Cardiac septum (tissue), 1 donor: ENCODE measurements at regions of chr3 and their contacts with region 1.

Region 1: DNA sequence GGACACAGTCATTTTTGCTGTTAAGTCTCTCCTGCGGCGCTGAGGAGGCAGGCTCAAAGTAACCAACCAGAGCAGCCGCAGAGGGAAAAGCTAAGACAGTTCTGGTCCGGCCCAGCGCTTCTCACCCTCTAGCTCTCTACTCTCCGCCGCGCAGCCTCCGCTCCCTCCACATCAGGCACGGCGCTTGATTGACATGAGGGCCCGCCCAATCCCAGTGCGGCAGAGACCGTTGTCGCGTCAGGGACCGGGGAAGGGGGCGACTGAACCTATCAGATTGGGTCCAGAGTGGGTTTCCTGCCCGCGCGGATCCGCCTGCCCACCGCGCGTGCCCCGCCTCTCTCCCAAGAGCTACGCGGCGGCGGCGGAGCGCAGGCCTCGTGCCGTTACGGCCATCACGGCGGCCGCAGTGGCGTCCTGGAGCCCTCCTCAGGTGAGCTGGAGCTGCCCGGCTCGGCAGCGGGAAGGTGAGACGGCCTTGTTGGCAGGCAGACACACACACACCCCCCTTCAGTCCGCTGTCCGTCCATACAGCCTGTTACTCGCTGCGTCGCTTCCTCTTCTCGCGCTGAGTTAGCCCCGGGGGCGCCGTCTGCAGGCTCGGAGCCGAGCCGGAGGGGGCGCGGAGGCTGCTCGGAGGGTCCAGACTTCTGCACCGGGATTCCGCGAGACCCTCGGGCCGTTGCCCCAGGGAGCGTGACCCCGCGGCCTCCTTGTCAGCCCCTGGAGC is at the start of gene NCK1:
- DNase-seq: peak; percentile 99
- total RNA-seq, gene NCK1: 22.1 TPM

Region 2: DNA sequence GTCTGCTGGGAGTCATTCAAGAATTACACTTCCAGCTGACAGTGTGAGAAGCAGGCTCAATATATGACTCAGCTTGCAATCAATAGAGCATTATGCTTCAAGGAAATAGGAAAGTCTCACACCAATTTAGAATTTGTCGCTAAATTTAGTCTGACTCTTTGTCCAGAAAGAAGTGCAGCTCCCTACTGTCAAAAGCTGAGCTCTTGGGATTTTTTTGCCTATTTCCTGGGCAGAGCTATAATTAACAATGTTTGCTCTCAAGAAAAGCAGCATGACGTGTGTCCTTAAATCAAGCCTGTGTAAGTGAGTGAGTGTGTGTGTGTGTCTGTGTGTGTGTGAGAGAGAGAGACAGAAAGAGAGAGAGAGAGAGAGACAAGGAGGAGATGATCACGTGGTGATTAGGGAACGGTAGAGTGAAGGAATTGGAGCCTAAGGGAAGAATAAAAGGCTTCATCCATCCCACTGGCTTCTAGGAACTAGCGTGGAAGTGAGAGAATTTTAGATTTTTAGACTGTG is 59.5 kb before region 1 on chr3:
- intact Hi-C with region 1: no loop called
- DNase-seq: no peak

Region 3: GRCh38 chr3:136818769-136819391 is 43.2 kb before region 1 on chr3 and contains the start of gene SLC35G2:
- intact Hi-C with region 1: loop called (anchors 2 kb)
- DNase-seq: peak; percentile 82
- total RNA-seq, gene SLC35G2: 4.7 TPM

Region 4: GRCh38 chr3:136929984-136930670 is 68.1 kb after region 1 on chr3:
- intact Hi-C with region 1: loop called (anchors 5 kb)
- DNase-seq: peak; percentile 81

Region 5: DNA sequence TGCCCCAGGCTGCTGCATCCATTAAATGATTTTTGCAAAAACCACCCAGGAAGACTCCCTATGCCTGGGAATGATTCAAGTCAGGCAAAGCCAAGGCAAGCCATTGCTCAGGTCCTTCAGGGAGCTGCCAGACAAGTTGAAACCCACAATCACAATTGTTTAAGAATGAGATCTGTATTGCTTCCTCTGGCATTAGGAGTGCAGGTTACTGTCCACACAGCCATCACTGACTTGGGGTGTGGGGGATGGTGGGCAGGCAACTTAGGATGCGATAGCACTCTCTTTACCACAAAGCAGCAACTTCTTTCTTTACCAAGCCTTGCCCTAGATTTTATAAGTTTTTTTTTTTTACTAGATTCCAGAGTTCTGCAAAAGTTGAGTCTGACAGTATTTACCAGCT is 80.8 kb after region 1 on chr3:
- intact Hi-C with region 1: no loop called
- DNase-seq: no peak